ENCODE measurements at regions of chr2 and their contacts with region 1.

Region 1: DNA sequence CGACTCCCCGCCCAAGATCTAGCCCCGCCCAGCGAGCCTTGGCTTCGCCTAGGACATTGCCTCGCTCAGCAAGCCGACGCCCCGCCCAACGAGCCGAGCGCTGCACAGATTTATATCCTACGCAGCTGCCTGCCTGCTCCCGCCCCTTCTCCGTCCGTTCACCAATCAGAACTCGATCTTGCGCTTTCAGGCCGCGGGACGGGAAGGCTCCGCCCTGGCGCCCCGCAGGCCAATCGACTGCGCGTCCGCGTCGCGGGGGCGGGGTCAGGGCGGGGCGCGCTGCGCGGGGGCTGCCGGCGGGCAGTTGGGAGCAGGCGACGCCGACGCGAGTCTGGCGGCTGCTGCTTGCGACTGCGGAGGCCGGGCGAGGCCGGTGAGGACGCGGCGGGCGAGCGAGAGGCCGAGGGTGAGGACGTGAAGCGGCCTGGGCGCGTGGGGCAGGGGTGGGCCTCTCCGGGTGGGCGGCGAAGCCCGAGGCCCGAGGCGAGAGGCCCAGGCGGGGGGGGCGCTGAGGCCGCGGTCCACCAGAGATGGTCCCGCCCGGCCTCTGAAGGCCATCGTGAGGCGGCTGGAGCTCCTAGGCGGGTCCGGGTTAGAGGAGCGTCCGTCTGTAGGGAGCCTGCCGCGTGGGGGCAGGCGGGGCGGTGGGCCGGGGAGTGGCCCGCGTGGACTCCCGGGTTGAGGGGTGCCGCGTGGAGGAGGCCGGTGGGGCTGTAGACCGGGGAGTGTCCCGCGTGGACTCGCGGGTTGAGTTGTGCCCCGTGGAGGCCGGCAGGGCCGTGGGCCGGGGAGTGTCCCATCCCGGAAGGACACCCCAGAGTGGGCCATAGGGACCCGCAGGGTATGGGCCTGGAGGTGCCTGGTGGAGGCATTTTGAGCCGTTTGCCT is at the start of gene FARP2:
- DNase-seq: peak; percentile 94
- ATAC-seq: peak; percentile 89
- H3K4me3 Mint-ChIP-seq: peak within 1 kb of the TSS; percentile 87
- H3K27ac Mint-ChIP-seq: peak within 1 kb of the TSS; percentile 88
- H3K4me1 Mint-ChIP-seq: peaks cover 49% of the 10 kb centered on the region
- H3K27me3 Mint-ChIP-seq: no peaks in the 10 kb centered on the region
- CTCF ChIP-seq: no peak
- total RNA-seq, gene FARP2: 74.7 and 91.2 TPM in 2 replicates

Region 2: GRCh38 chr2:240250985-240251847 is 1105.0 kb before region 1 on chr2:
- CTCF ChIA-PET with region 1: no interaction called
- POLR2A ChIA-PET with region 1: no interaction called
- intact Hi-C with region 1: no loop called
- DNase-seq: no peak
- ATAC-seq: no peak
- H3K4me3 Mint-ChIP-seq: no peak overlapping the region
- H3K27ac Mint-ChIP-seq: no peak overlapping the region
- H3K4me1 Mint-ChIP-seq: no peaks in the 10 kb centered on the region
- H3K27me3 Mint-ChIP-seq: peaks cover 2% of the 10 kb centered on the region
- CTCF ChIP-seq: no peak

Region 3: DNA sequence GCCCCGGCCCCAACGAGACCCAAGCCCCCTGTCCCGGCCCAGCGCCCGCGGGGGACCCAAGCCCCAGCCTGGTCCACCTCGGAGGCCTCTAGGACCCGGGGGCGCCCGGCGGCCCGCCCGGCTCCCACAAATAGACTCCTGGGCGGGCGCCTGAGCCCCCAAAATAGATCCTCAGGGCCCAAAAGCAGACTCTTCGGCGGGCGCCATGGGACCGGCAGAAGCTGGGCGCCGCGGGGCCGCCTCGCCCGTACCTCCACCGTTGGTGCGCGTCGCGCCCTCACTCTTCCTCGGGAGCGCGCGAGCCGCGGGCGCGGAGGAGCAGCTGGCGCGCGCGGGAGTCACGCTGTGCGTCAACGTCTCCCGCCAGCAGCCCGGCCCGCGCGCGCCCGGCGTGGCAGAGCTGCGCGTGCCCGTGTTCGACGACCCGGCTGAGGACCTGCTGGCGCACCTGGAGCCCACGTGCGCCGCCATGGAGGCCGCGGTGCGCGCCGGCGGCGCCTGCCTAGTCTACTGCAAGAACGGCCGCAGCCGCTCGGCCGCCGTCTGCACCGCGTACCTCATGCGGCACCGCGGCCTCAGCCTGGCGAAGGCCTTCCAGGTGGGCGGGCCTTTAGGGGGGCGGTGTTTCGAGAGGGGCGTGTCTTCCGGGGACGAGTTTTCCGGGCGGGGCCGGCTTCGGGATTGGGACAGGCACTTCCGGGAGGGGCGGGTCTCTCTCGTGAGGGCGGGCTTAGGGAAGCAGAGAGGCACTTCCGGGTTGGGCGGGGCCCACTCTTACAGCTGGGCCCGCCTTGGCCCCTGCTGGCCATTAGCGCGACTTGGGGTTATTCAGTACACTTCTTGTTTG is 795.5 kb before region 1 on chr2:
- CTCF ChIA-PET with region 1: no interaction called
- POLR2A ChIA-PET with region 1: no interaction called
- intact Hi-C with region 1: loop called (anchors 5 kb)
- DNase-seq: peak; percentile 99
- ATAC-seq: peak; percentile 70
- H3K4me3 Mint-ChIP-seq: peak overlapping the region; percentile 81
- H3K27ac Mint-ChIP-seq: peak overlapping the region; percentile 89
- H3K4me1 Mint-ChIP-seq: peaks cover 77% of the 10 kb centered on the region
- H3K27me3 Mint-ChIP-seq: no peaks in the 10 kb centered on the region
- CTCF ChIP-seq: no peak

Region 4: GRCh38 chr2:240898108-240898730 is 458.0 kb before region 1 on chr2:
- CTCF ChIA-PET with region 1: no interaction called
- POLR2A ChIA-PET with region 1: no interaction called
- intact Hi-C with region 1: no loop called
- DNase-seq: no peak
- ATAC-seq: no peak
- H3K4me3 Mint-ChIP-seq: no peak overlapping the region
- H3K27ac Mint-ChIP-seq: no peak overlapping the region
- H3K4me1 Mint-ChIP-seq: no peaks in the 10 kb centered on the region
- H3K27me3 Mint-ChIP-seq: no peaks in the 10 kb centered on the region
- CTCF ChIP-seq: no peak

Region 5: DNA sequence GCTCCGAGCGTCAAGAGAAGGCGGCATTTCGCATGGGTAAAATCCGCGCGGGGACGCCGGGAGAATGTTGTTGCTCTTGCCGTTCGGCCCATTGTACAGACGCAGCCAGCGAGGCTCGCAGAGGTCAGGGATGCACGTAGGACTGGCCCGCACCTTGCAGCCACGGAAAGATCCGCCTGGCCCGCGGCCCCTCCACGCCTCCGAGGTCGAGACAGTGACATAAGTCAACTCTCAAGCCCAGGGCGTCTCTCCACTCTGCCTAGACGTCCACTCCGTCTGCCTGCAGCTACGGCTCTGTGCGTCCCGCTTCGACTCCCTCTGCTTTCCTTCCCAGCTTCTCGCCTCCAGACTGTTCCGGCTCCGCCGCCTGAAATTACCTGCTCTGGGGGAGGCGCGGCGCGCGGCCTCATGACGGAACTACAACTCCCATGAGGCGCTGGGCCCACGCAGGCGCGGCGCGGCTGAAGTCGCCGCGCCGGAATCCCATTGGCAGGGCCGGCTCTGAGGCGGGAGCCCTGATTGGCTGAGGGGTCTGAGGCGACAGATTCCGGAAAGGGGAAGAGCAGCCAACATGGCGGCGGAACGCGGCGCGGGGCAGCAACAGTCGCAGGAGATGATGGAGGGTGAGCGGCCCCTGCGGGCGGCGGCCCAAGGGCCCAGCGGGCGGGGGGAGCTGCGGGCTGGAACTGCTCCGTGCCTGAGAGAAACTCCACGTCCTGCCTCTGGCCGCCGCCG is 206.1 kb before region 1 on chr2 and contains the start of gene PPP1R7:
- CTCF ChIA-PET with region 1: no interaction called
- POLR2A ChIA-PET with region 1: no interaction called
- intact Hi-C with region 1: loop called (anchors 1 kb)
- DNase-seq: peak; percentile 84
- ATAC-seq: peak; percentile 83
- H3K4me3 Mint-ChIP-seq: peak within 1 kb of the TSS; percentile 100
- H3K27ac Mint-ChIP-seq: peak within 1 kb of the TSS; percentile 95
- H3K4me1 Mint-ChIP-seq: peaks cover 26% of the 10 kb centered on the region
- H3K27me3 Mint-ChIP-seq: no peaks in the 10 kb centered on the region
- CTCF ChIP-seq: no peak
- total RNA-seq, gene PPP1R7: 72.0 and 74.5 TPM in 2 replicates

Region 6: DNA sequence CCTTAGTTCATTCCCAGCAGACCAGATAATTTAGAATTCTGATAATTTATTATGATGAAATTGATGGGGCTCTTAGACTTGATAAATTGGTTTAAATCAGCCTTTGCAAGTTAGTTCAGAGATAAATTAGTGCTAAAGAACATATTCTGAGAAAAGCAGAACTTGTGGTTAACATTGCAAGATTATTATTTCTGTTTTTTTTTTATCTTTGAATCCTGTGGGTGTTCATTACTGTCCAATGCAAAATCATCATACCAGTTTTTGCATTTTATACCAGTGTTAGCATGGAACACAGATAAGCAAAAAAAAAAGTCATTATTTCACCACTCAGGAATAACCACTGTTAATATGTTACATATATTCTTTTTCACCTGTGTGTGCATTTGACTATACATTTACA is 31.5 kb before region 1 on chr2:
- CTCF ChIA-PET with region 1: no interaction called
- POLR2A ChIA-PET with region 1: no interaction called
- intact Hi-C with region 1: no loop called
- DNase-seq: no peak
- ATAC-seq: peak; percentile 64
- H3K4me3 Mint-ChIP-seq: peak overlapping the region; percentile 0
- H3K27ac Mint-ChIP-seq: peak overlapping the region; percentile 3
- H3K4me1 Mint-ChIP-seq: peaks cover 54% of the 10 kb centered on the region
- H3K27me3 Mint-ChIP-seq: no peaks in the 10 kb centered on the region
- CTCF ChIP-seq: no peak

Region 7: DNA sequence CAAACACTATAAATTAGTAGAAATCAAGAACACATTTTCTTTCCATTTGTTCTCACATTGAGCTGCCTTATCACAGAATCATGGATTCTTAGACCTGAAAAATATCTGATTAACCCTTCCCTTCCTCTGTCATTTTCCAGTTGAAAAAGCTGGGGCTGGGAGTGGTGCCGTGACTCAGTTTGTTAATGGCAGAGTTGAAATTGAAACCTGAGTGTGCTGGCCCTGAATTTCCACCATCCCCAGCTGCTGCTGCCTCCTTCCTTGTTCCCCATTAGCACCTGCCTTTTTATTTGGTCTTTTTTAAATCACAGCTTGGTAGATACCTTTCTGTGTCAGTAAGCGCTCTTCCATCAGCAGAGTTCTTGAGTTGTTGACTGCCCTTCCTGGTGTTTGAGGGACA is 10.5 kb after region 1 on chr2:
- CTCF ChIA-PET with region 1: interaction called, 3 read pairs
- POLR2A ChIA-PET with region 1: interaction called, 11 read pairs
- intact Hi-C with region 1: loop called (anchors 1 kb)
- DNase-seq: no peak
- ATAC-seq: no peak
- H3K4me3 Mint-ChIP-seq: peak overlapping the region; percentile 8
- H3K27ac Mint-ChIP-seq: peak overlapping the region; percentile 27
- H3K4me1 Mint-ChIP-seq: peaks cover 69% of the 10 kb centered on the region
- H3K27me3 Mint-ChIP-seq: no peaks in the 10 kb centered on the region
- CTCF ChIP-seq: no peak

Region 8: DNA sequence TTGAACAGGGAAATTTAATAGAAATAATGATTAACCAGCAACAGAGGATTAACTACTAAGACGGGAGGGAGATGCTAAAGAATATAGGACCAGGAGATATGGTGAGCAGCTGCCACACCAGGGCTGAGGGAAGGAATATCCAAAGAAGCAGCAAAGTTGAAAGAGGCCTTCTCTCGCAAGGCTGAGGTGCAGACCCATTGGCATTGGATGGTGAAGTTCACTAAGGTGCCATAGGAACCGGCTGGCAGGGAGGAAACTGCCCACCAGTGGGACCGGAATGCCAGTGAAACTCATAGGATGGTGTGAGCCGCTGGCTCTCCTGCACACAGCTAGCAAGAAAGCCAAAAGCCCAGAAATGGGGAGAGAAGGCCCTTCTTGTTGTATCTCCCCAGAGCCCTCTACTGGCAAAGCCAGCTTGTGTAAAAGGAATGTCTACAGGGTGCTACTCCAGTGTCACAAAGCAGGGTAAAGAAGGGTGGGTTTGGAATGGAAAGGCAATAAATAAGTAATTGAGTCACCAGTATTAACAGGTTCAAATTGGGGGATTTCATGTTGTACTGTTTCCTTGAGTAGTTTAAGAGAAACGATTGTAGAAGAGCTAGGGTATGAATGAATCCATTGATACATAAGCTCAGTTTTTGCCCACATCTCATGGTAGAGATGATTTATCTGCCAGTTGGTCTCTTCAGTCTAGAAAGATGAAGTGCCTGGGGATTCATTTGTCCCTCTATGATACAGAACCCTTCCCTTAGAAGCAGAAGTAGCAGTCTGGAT is 35.9 kb after region 1 on chr2:
- CTCF ChIA-PET with region 1: interaction called, 11 read pairs
- POLR2A ChIA-PET with region 1: interaction called, 15 read pairs
- intact Hi-C with region 1: loop called (anchors 1 kb)
- DNase-seq: no peak
- ATAC-seq: peak; percentile 19
- H3K4me3 Mint-ChIP-seq: no peak overlapping the region
- H3K27ac Mint-ChIP-seq: peak overlapping the region; percentile 73
- H3K4me1 Mint-ChIP-seq: peaks cover 54% of the 10 kb centered on the region
- H3K27me3 Mint-ChIP-seq: no peaks in the 10 kb centered on the region
- CTCF ChIP-seq: no peak

Region 9: DNA sequence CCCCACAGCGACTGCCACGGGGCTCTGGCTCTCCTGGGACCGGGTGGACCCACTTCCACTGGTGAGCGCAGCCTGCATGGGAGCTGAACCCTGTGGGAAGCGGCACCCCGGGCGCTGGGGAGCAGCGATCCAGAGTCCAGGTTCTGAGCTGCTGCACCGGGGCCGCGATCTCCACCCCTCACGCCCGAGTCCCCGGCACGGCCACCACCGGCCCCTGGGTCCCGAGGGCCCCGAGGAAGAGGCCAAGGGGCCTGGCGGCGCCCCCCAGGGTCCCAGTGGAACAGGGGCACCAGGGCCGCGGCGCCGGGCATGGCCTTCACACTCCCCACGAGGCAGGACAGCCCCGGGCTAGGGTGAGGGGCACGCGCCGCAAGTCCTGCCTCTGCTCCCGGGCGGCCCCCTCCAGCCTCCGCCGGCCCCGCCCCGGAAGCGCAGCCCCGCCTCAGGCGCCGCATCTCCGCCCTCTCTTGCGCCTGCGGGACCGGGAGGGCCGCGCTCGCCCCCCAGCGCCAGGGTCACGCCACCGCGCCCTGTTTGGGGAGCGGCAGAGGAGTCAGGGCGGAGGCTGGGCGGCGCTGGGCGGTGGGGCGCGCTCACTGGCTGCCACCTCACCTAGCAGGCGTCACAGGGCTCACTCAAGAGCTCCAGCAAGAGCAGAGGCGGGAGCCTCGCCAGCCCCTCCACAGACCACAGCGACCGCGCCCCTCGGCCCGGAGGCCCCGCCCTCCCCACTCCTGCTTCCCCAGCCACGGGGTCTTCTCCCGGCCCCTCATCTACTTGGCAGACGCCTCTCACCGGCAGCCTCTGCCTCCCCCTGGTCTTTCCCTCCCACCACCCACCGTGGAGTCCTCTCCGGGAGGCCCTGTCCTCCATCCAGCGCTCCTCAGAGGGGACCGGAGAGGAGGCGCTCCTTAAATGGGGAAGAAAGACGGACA is 253.9 kb after region 1 on chr2:
- CTCF ChIA-PET with region 1: no interaction called
- POLR2A ChIA-PET with region 1: no interaction called
- intact Hi-C with region 1: loop called (anchors 5 kb)
- DNase-seq: peak; percentile 92
- ATAC-seq: peak; percentile 99
- H3K4me3 Mint-ChIP-seq: peak overlapping the region; percentile 66
- H3K27ac Mint-ChIP-seq: peak overlapping the region; percentile 53
- H3K4me1 Mint-ChIP-seq: peaks cover 15% of the 10 kb centered on the region
- H3K27me3 Mint-ChIP-seq: no peaks in the 10 kb centered on the region
- CTCF ChIP-seq: no peak

Region 10: DNA sequence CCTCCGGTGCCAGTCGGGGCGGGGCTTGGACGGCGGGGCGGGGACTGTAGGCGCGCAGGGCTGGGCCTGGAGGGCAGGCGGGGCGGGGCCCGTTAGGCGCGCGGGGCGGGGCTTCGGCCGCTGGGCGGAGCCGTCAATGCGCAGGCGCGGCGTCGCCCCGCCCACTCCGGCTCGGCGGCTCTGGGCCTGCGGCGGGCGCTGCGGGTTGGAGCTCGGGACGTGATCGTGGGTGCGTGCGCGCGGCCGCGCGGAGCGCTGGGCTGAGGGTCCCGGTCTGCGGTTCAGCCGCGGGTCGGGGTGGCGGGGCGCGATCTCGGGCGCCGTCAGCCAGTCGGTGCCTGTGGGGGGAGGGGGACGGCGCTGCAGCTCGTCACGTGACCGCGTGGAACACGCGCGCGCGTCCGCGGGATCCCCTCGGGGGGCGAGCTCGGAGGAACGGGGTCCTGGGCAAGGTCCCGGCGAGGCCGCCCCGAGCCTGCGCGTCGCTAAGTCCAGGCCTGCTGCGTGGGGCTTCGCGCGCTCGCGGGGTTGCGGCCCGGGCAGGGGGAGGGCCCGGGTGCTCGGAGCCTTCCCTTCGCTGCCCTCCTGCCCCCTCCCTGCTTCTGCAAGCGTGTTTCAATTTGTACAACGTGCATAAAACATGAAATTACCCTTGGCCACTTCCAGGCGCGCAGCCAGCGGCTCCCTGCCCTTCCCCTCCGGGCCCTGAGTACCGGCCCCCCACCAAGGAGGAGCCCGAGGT is 378.4 kb after region 1 on chr2 and contains the start of gene D2HGDH:
- CTCF ChIA-PET with region 1: no interaction called
- POLR2A ChIA-PET with region 1: no interaction called
- intact Hi-C with region 1: loop called (anchors 2 kb)
- DNase-seq: peak; percentile 97
- ATAC-seq: peak; percentile 94
- H3K4me3 Mint-ChIP-seq: peak within 1 kb of the TSS; percentile 82
- H3K27ac Mint-ChIP-seq: peak within 1 kb of the TSS; percentile 75
- H3K4me1 Mint-ChIP-seq: peaks cover 57% of the 10 kb centered on the region
- H3K27me3 Mint-ChIP-seq: no peaks in the 10 kb centered on the region
- CTCF ChIP-seq: no peak
- total RNA-seq, gene D2HGDH: 37.7 and 55.4 TPM in 2 replicates

Region 11: GRCh38 chr2:241933179-241933911 is 577.1 kb after region 1 on chr2:
- CTCF ChIA-PET with region 1: no interaction called
- POLR2A ChIA-PET with region 1: no interaction called
- intact Hi-C with region 1: no loop called
- DNase-seq: no peak
- ATAC-seq: no peak
- H3K4me3 Mint-ChIP-seq: no peak overlapping the region
- H3K27ac Mint-ChIP-seq: no peak overlapping the region
- H3K4me1 Mint-ChIP-seq: no peaks in the 10 kb centered on the region
- H3K27me3 Mint-ChIP-seq: no peaks in the 10 kb centered on the region
- CTCF ChIP-seq: no peak